Activated naive CD4-positive, alpha-beta T cell treated with anti-CD3 and anti-CD28 coated beads for 36 hours (primary cell): ENCODE measurements at regions of chrX and their contacts with region 1.

Region 1: GRCh38 chrX:125295337-125295736 is 24.3 kb upstream of the TEX13C start:
- DNase-seq: peak; percentile 8
- H3K4me3 Mint-ChIP-seq: no peak overlapping the region
- H3K27ac Mint-ChIP-seq: peak overlapping the region; percentile 51
- H3K4me1 Mint-ChIP-seq: peaks cover 22% of the 10 kb centered on the region
- H3K27me3 Mint-ChIP-seq: no peaks in the 10 kb centered on the region

Region 2: DNA sequence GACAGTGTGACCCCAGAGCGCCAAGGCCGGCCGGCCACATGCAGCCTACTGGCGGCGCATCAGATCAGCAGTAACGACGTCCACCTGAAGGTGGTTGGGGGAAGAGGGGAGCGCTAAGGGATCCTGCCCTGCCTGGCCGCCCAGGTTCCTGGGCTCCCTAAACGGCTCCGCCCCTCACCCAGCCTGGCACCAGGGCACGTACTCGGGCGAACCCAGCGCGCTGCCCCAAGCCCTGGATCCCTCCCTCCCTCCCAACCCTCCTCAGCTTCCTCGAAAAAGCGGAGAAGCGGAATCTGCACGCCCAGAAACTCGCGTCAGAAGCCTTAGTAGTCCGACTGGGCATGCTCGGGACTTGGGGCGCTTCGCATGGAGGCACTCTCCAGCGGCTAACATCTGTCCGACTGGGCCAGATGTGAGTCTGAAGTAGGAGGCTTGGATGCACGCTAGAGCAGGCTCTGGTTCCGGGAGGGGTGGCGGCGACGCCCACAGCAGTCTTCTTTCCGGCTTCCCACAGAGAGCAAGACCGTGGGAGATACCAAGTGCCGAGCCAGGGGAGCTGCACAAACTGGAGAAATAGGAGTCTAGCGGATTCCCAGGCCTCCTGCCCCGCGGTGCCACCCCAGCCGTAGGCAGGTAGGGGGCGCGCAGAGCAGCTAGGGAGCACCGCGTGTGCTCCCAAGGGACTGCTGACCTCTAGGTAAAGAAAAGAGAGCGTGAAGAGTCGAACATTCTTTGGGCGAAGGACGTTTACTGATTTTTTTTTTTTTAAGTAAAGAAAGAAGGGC is 90.0 kb before region 1 on chrX:
- CTCF ChIA-PET with region 1: no interaction called
- intact Hi-C with region 1: loop called (anchors 2 kb)
- DNase-seq: peak; percentile 25
- H3K4me3 Mint-ChIP-seq: peak overlapping the region; percentile 69
- H3K27ac Mint-ChIP-seq: no peak overlapping the region
- H3K4me1 Mint-ChIP-seq: peaks cover 13% of the 10 kb centered on the region
- H3K27me3 Mint-ChIP-seq: peaks cover 34% of the 10 kb centered on the region

Region 3: DNA sequence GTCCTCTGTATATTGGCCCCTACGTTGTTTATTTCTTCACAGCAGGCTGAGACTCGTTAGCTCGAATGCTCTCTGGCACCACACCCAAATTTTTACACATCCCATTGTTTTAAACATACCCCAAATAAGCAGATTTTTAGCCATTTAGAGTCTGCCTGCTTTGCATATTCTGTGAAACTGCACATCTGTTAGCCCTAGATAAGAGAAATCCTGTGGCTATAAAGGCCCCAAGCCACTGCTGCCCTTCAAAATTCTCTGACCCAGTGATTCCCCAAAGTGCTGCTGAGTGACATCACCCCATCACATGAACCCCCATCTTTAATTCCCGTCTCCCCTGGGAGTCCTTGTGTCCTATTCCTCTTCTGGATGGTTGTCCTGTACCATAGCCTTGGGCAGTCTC is 45.2 kb after region 1 on chrX:
- CTCF ChIA-PET with region 1: no interaction called
- intact Hi-C with region 1: no loop called
- DNase-seq: no peak
- H3K4me3 Mint-ChIP-seq: no peak overlapping the region
- H3K27ac Mint-ChIP-seq: no peak overlapping the region
- H3K4me1 Mint-ChIP-seq: no peaks in the 10 kb centered on the region
- H3K27me3 Mint-ChIP-seq: no peaks in the 10 kb centered on the region